GM12878 (cell line): ENCODE measurements at regions of chr3 and their contacts with region 1.

Region 1: GRCh38 chr3:149114458-149114857 is 15.0 kb upstream of the HPS3 start:
- DNase-seq: no peak
- ATAC-seq: no peak
- H3K4me3 ChIP-seq: no peak overlapping the region
- H3K27ac ChIP-seq: no peak overlapping the region
- H3K4me1 ChIP-seq: no peaks in the 10 kb centered on the region
- H3K27me3 ChIP-seq: no peaks in the 10 kb centered on the region
- CTCF ChIP-seq: no peak
- EP300 ChIP-seq: no peak
- POLR2A ChIP-seq: no peak
- RAD21 ChIP-seq: no peak

Region 2: GRCh38 chr3:149273096-149273751 is 158.8 kb after region 1 on chr3:
- CTCF ChIA-PET with region 1: interaction called, 168 read pairs
- POLR2A ChIA-PET with region 1: no interaction called
- RAD21 ChIA-PET with region 1: interaction called, 3 read pairs
- SMC1A ChIA-PET with region 1: interaction called, 86 read pairs
- in situ Hi-C with region 1: loop called (anchors 5 kb)
- intact Hi-C with region 1: no loop called
- DNase-seq: peak; percentile 45
- ATAC-seq: peak; percentile 91
- H3K4me3 ChIP-seq: no peak overlapping the region
- H3K27ac ChIP-seq: no peak overlapping the region
- H3K4me1 ChIP-seq: peaks cover 4% of the 10 kb centered on the region; the same call in 1 of the 2 replicates
- H3K27me3 ChIP-seq: no peaks in the 10 kb centered on the region
- CTCF ChIP-seq: peak; percentile 82 to 100 (median 97); a peak in 5 of 6 replicates
- EP300 ChIP-seq: no peak
- POLR2A ChIP-seq: no peak
- RAD21 ChIP-seq: peak; percentile 100